CD4-positive, alpha-beta memory T cell (primary cell): ENCODE measurements at regions of chr1 and their contacts with region 1.

Region 1: DNA sequence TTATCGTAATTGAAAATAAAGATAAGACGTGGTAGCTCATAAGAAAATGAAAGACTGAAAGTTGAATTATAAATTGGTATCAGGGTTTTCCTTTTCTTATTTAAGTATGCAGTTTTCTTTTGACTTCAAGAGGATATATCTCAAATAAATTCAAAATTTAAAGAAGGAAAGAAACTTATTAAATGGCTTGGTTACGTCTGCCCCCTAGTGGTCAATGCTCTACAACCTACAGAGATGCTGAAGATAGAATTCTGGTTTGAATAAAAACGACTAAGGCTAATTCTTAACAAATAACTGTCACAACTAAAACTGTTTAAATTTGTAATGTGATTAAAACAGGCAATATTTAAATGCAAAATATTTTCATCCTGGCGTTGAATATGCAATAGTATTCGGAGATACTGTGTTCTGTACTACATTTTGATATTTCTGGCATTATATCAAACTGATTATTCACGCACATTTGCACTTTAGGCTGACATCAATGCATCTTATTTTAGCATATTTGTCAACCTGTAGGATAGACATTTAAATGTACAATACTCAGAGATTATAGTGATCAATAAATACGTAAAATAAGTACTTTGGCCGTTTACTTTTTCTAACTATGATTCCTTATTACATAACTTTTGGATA is 26.8 kb downstream of the IFI44 start:
- DNase-seq: peak; percentile 48 to 64 (median 63)
- H3K4me3 ChIP-seq: no peak overlapping the region
- H3K4me3 Mint-ChIP-seq: no peak overlapping the region
- H3K27ac ChIP-seq: no peak overlapping the region
- H3K27ac Mint-ChIP-seq: no peak overlapping the region
- H3K4me1 ChIP-seq: no peaks in the 10 kb centered on the region
- H3K4me1 Mint-ChIP-seq: peaks cover 0 to 11% (median 7%) of the 10 kb centered on the region in 4 donors
- H3K27me3 ChIP-seq: no peaks in the 10 kb centered on the region
- H3K27me3 Mint-ChIP-seq: peaks cover 1 to 7% of the 10 kb centered on the region in 2 donors

Region 2: GRCh38 chr1:78126506-78126905 is 550.0 kb before region 1 on chr1:
- CTCF ChIA-PET with region 1: interaction called, 3 read pairs
- POLR2A ChIA-PET with region 1: no interaction called
- intact Hi-C with region 1: loop called (anchors 1 kb)
- DNase-seq: no peak
- H3K4me3 ChIP-seq: no peak overlapping the region
- H3K4me3 Mint-ChIP-seq: no peak overlapping the region
- H3K27ac ChIP-seq: no peak overlapping the region
- H3K27ac Mint-ChIP-seq: no peak overlapping the region
- H3K4me1 ChIP-seq: no peaks in the 10 kb centered on the region
- H3K4me1 Mint-ChIP-seq: no peaks in the 10 kb centered on the region
- H3K27me3 ChIP-seq: no peaks in the 10 kb centered on the region
- H3K27me3 Mint-ChIP-seq: no peaks in the 10 kb centered on the region

Region 3: GRCh38 chr1:78145105-78145580 is 531.3 kb before region 1 on chr1:
- CTCF ChIA-PET with region 1: interaction called, 10 read pairs
- POLR2A ChIA-PET with region 1: no interaction called
- intact Hi-C with region 1: loop called (anchors 1 kb)
- DNase-seq: peak in 4 of 5 donors; percentile 29 to 36 (median 32)
- H3K4me3 ChIP-seq: no peak overlapping the region
- H3K4me3 Mint-ChIP-seq: peak overlapping the region in 1 of 8 donors; percentile 50
- H3K27ac ChIP-seq: no peak overlapping the region
- H3K27ac Mint-ChIP-seq: no peak overlapping the region
- H3K4me1 ChIP-seq: peaks cover 11% of the 10 kb centered on the region
- H3K4me1 Mint-ChIP-seq: peaks cover 8 to 35% (median 12%) of the 10 kb centered on the region in 4 donors
- H3K27me3 ChIP-seq: no peaks in the 10 kb centered on the region
- H3K27me3 Mint-ChIP-seq: peaks cover 9 to 13% of the 10 kb centered on the region in 2 donors

Region 4: DNA sequence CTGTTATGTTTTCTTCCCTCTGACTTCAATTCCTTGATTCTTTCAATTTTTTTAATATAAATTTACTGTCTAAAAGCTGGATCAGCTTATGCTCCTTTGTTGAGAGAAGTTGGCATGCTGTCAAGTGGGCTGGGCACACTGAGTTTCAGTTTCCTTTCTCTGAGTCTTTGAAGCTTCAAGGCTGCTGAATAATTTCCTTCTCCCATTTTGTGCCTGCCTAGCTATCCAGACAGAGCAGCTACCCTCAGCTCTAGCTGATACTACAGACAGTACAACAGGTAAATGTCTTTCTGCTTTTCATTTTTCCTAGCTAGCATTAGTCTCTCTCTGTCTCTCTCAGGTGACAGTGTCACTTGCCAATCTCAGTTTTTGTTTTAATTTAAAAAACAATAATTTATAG is 26.8 kb before region 1 on chr1 and contains the start of gene IFI44:
- CTCF ChIA-PET with region 1: interaction called, 7 read pairs
- POLR2A ChIA-PET with region 1: interaction called, 3 read pairs
- intact Hi-C with region 1: loop called (anchors 1 kb)
- DNase-seq: peak; percentile 75 to 84 (median 78)
- H3K4me3 ChIP-seq: peak within 1 kb of the TSS; percentile 68 to 73
- H3K4me3 Mint-ChIP-seq: peak within 1 kb of the TSS; percentile 90 to 97 (median 93)
- H3K27ac ChIP-seq: peak within 1 kb of the TSS; percentile 66
- H3K27ac Mint-ChIP-seq: peak within 1 kb of the TSS; percentile 88 to 97 (median 95)
- H3K4me1 ChIP-seq: peaks cover 63% of the 10 kb centered on the region
- H3K4me1 Mint-ChIP-seq: peaks cover 46 to 88% (median 69%) of the 10 kb centered on the region in 4 donors
- H3K27me3 ChIP-seq: no peaks in the 10 kb centered on the region
- H3K27me3 Mint-ChIP-seq: no peaks in the 10 kb centered on the region
- total RNA-seq, gene IFI44: 45.6 to 49.4 TPM

Region 5: DNA sequence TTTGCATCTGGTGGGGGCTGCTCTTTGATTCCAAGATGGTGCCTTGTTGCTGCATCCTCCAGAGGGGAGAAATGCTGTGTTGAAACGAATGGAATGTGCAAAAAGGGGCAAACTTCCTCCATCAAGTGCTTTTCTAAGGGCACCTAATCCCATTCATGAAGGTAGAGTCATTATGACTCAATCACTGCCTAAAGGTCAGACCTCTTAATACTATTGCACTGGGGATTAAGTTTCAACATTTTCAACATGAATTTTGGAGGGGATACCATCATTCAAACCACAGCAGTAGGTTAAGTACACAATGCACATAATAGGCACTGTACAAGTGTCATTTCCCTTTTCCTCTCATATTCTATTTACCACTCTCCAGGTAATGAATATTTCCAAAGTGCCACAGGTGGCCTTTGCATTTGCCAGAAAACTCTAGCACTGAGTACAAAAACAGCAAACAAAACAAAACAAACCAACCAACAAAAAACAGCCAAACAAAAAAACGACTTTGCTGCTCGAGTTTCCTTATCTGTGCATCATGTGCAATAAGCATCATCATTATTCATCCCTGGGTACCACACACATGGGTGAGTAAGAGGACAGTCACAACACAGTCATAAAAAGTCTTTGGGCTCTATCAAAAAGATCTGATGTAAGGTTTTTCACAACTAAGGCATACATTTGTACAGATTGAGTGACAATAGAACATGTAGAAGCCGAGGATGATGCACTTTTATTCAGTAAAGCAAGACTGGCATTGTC is 15.7 kb after region 1 on chr1:
- CTCF ChIA-PET with region 1: no interaction called
- POLR2A ChIA-PET with region 1: no interaction called
- intact Hi-C with region 1: no loop called
- DNase-seq: no peak
- H3K4me3 ChIP-seq: no peak overlapping the region
- H3K4me3 Mint-ChIP-seq: no peak overlapping the region
- H3K27ac ChIP-seq: no peak overlapping the region
- H3K27ac Mint-ChIP-seq: no peak overlapping the region
- H3K4me1 ChIP-seq: no peaks in the 10 kb centered on the region
- H3K4me1 Mint-ChIP-seq: no peaks in the 10 kb centered on the region
- H3K27me3 ChIP-seq: no peaks in the 10 kb centered on the region
- H3K27me3 Mint-ChIP-seq: peaks cover 8 to 12% of the 10 kb centered on the region in 2 donors